ENCODE measurements at regions of chr4 and their contacts with region 1.

Region 1: GRCh38 chr4:91147067-91147466 is 1019.9 kb downstream of the CCSER1 start:
- DNase-seq: no peak
- ATAC-seq: no peak
- H3K4me3 ChIP-seq: no peak overlapping the region
- H3K27ac ChIP-seq: no peak overlapping the region
- H3K4me1 ChIP-seq: no peaks in the 10 kb centered on the region
- H3K27me3 ChIP-seq: no peaks in the 10 kb centered on the region
- CTCF ChIP-seq: no peak
- EP300 ChIP-seq: no peak
- POLR2A ChIP-seq: no peak
- RAD21 ChIP-seq: no peak

Region 2: GRCh38 chr4:91171210-91171609 is 24.1 kb after region 1 on chr4:
- CTCF ChIA-PET with region 1: no interaction called
- POLR2A ChIA-PET with region 1: no interaction called
- in situ Hi-C with region 1: no loop called
- intact Hi-C with region 1: loop called (anchors 1 kb)
- DNase-seq: no peak
- ATAC-seq: no peak
- H3K4me3 ChIP-seq: no peak overlapping the region
- H3K27ac ChIP-seq: no peak overlapping the region
- H3K4me1 ChIP-seq: no peaks in the 10 kb centered on the region
- H3K27me3 ChIP-seq: no peaks in the 10 kb centered on the region
- CTCF ChIP-seq: no peak
- EP300 ChIP-seq: no peak
- POLR2A ChIP-seq: no peak
- RAD21 ChIP-seq: no peak

Region 3: DNA sequence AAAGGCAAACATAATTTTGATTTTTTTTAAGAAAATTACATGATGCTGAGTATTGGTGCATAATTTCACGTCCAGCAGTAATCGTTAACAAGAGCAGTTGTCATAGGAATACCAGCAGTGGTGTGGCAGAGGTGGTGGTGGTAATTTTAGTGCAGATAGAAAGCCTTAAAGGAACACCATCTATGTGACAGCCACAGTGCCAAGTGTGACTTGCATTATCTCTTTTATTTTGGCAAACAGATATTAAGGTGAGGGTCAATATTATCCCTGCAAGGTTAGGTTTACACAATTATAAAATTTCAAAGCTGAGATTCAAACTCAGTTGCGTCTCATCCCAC is 212.6 kb after region 1 on chr4:
- CTCF ChIA-PET with region 1: no interaction called
- POLR2A ChIA-PET with region 1: no interaction called
- in situ Hi-C with region 1: no loop called
- intact Hi-C with region 1: no loop called
- DNase-seq: no peak
- ATAC-seq: no peak
- H3K4me3 ChIP-seq: no peak overlapping the region
- H3K27ac ChIP-seq: no peak overlapping the region
- H3K4me1 ChIP-seq: no peaks in the 10 kb centered on the region
- H3K27me3 ChIP-seq: no peaks in the 10 kb centered on the region
- CTCF ChIP-seq: no peak
- EP300 ChIP-seq: no peak
- POLR2A ChIP-seq: no peak
- RAD21 ChIP-seq: no peak

Region 4: GRCh38 chr4:93147524-93148212 is 2000.6 kb after region 1 on chr4:
- CTCF ChIA-PET with region 1: no interaction called
- POLR2A ChIA-PET with region 1: no interaction called
- in situ Hi-C with region 1: no loop called
- intact Hi-C with region 1: loop called (anchors 10 kb)
- DNase-seq: no peak
- ATAC-seq: no peak
- H3K4me3 ChIP-seq: no peak overlapping the region
- H3K27ac ChIP-seq: no peak overlapping the region
- H3K4me1 ChIP-seq: no peaks in the 10 kb centered on the region
- H3K27me3 ChIP-seq: no peaks in the 10 kb centered on the region; a peak in 1 of 5 replicates
- CTCF ChIP-seq: no peak
- EP300 ChIP-seq: no peak
- POLR2A ChIP-seq: no peak
- RAD21 ChIP-seq: no peak

Measured in HepG2 (cell line).